ENCODE measurements at regions of chr14 and their contacts with region 1.

Region 1: GRCh38 chr14:49862089-49862673 is 9.6 kb upstream of the NEMF start:
- DNase-seq: peak; percentile 62 to 81
- H3K4me3 ChIP-seq: peak overlapping the region; percentile 100
- H3K27ac ChIP-seq: peak overlapping the region; percentile 92
- H3K4me1 ChIP-seq: peaks cover 35% of the 10 kb centered on the region; the same call in 1 of the 2 replicates
- H3K27me3 ChIP-seq: no peaks in the 10 kb centered on the region
- CTCF ChIP-seq: peak; percentile 100

Region 2: GRCh38 chr14:49940808-49941421 is 78.7 kb after region 1 on chr14:
- CTCF ChIA-PET with region 1: interaction called, 3 read pairs
- POLR2A ChIA-PET with region 1: interaction called, 11 read pairs
- intact Hi-C with region 1: no loop called
- DNase-seq: peak in 1 of 2 experiments; percentile 85
- H3K4me3 ChIP-seq: no peak overlapping the region
- H3K27ac ChIP-seq: peak overlapping the region; percentile 42
- H3K4me1 ChIP-seq: peaks cover 29% of the 10 kb centered on the region
- H3K27me3 ChIP-seq: no peaks in the 10 kb centered on the region
- CTCF ChIP-seq: no peak

Region 3: GRCh38 chr14:50008562-50009350 is 146.6 kb after region 1 on chr14:
- CTCF ChIA-PET with region 1: interaction called, 9 read pairs
- POLR2A ChIA-PET with region 1: interaction called, 13 read pairs
- intact Hi-C with region 1: loop called (anchors 1 kb)
- DNase-seq: peak; percentile 81 to 98
- H3K4me3 ChIP-seq: peak overlapping the region; percentile 58
- H3K27ac ChIP-seq: peak overlapping the region; percentile 100
- H3K4me1 ChIP-seq: peaks cover 78% of the 10 kb centered on the region
- H3K27me3 ChIP-seq: no peaks in the 10 kb centered on the region
- CTCF ChIP-seq: no peak

Region 4: DNA sequence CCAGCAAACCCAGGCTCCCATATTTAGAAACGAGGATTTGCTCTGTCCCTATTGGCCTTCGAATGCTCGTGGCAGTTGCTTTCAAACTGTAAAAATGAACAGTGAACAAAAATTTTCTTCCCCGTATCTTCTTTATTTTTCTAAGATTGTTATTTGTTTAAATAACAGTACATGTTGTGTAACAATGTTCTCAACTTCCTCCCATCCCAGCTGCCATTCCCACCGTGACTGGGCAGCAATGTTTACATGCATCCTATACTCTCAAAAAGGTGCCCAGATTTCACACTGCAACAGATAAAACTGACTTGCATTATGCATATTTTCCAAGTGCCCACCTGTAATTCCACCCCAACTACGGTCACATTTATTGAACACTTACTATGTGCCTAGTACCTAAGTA is 241.4 kb after region 1 on chr14:
- CTCF ChIA-PET with region 1: interaction called, 10 read pairs
- POLR2A ChIA-PET with region 1: interaction called, 4 read pairs
- intact Hi-C with region 1: loop called (anchors 1 kb)
- DNase-seq: no peak
- H3K4me3 ChIP-seq: no peak overlapping the region
- H3K27ac ChIP-seq: no peak overlapping the region
- H3K4me1 ChIP-seq: peaks cover 40% of the 10 kb centered on the region
- H3K27me3 ChIP-seq: no peaks in the 10 kb centered on the region
- CTCF ChIP-seq: no peak

Measured in PC-9 (cell line).